ENCODE measurements at regions of chr7 and their contacts with region 1.

Region 1: GRCh38 chr7:63925623-63926460 is 72.8 kb upstream of the ZNF722 start:
- DNase-seq: peak; percentile 78
- H3K4me3 Mint-ChIP-seq: peak overlapping the region; percentile 84
- H3K27ac Mint-ChIP-seq: peak overlapping the region; percentile 81
- H3K4me1 Mint-ChIP-seq: peaks cover 2% of the 10 kb centered on the region
- H3K27me3 Mint-ChIP-seq: no peaks in the 10 kb centered on the region

Region 2: GRCh38 chr7:63867127-63867526 is 58.7 kb before region 1 on chr7:
- intact Hi-C with region 1: no loop called
- DNase-seq: no peak
- H3K4me3 Mint-ChIP-seq: no peak overlapping the region
- H3K27ac Mint-ChIP-seq: no peak overlapping the region
- H3K4me1 Mint-ChIP-seq: no peaks in the 10 kb centered on the region
- H3K27me3 Mint-ChIP-seq: no peaks in the 10 kb centered on the region

Region 3: DNA sequence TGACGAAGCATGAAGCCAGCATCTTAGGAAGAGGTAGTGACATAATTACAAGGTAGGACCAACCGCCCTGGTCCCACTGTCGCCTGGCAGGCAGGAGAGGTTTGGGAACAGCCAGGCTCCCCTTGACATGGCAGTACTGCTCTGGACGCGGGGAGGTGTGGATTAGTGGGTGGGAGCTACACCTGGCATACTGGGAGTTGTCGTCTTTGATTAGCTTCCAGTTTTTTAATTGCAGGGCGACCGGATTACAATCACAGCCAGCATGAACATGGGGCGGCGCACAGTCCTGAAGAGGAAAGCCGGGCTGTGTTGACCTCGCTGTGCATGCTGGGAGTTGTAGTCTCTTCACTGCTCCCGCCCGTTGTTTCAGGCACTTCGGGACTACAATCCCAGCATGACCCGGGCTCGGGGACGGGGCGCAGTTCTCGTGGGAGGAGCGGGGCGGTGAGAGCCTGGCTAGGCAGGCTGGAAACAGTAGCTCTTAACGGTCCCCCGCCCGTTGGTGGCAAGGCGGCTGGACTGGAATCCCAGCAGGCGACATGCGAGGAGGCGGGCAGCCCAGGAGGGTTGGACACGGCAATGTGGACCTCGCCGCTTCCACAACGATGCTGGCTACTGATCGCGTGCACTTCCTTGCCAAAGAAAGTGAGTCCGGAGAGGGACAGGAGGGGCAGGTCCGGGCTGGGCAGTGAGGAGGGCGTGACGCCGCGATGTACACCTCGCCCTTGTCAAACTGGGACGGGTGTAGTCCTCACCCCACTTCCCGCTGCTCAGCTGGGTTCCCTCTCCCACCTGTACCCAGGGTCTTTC is 25.2 kb before region 1 on chr7:
- intact Hi-C with region 1: loop called (anchors 1 kb)
- DNase-seq: peak; percentile 56
- H3K4me3 Mint-ChIP-seq: peak overlapping the region; percentile 82
- H3K27ac Mint-ChIP-seq: peak overlapping the region; percentile 49
- H3K4me1 Mint-ChIP-seq: peaks cover 2% of the 10 kb centered on the region
- H3K27me3 Mint-ChIP-seq: no peaks in the 10 kb centered on the region

Region 4: GRCh38 chr7:64045301-64046040 is 119.6 kb after region 1 on chr7 and contains the start of gene ZNF727:
- intact Hi-C with region 1: no loop called
- DNase-seq: no peak
- H3K4me3 Mint-ChIP-seq: no peak within 1 kb of the TSS
- H3K27ac Mint-ChIP-seq: no peak within 1 kb of the TSS
- H3K4me1 Mint-ChIP-seq: no peaks in the 10 kb centered on the region
- H3K27me3 Mint-ChIP-seq: no peaks in the 10 kb centered on the region
- total RNA-seq, gene ZNF727: 0.11 and 0.18 TPM in 2 replicates

Region 5: DNA sequence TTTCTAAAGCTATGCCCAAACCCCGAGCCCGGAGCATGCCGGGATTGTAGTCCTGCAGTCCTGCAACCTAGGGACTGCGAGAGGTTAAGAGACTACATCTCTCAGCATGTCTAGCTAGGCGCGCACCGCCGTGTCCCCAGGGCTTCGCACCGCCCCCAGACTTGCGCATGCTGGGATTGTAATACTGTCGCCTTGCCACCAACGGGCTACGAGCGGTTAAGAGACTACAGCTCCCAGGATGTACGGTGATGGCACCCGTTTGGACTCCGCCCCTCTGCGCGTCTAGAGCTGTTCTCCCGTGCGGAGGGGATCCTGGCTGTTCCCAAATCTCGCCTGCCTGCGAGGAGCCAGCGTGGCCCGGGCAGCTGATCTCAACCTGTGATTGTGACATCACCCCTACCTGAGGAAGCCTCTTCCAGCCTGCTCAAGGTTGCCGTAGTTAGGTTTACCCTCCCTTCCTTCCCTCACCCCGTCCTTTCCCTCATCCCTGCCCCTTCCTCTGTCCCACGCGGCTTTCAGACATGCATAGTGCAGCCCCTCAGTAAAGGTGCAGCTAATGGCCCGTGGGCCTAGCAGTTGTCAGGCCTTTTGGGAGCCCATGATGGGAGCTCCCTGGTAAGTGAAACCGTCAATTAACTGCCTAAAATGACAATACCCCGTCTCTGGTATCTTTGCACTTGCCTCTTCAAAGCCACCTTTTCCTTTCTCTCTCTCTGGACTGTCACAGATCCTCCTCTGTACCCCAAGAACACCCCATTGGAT is 381.6 kb after region 1 on chr7:
- intact Hi-C with region 1: loop called (anchors 2 kb)
- DNase-seq: peak; percentile 92
- H3K4me3 Mint-ChIP-seq: peak overlapping the region; percentile 97
- H3K27ac Mint-ChIP-seq: peak overlapping the region; percentile 91
- H3K4me1 Mint-ChIP-seq: peaks cover 12% of the 10 kb centered on the region
- H3K27me3 Mint-ChIP-seq: no peaks in the 10 kb centered on the region

Measured in activated T-helper 2 cell treated with anti-CD3 and anti-CD28 coated beads, Interferon-gamma antibody, Interleukin-2, Interleukin-4, amounts not matched to agents 10 μg/mL and 5 μg/mL and 100 μg/mL, durations not matched to agents 14 hours and 24 hours and 36 hours (primary cell).